WTC11 (cell line): ENCODE measurements at regions of chr10 and their contacts with region 1.

Region 1: DNA sequence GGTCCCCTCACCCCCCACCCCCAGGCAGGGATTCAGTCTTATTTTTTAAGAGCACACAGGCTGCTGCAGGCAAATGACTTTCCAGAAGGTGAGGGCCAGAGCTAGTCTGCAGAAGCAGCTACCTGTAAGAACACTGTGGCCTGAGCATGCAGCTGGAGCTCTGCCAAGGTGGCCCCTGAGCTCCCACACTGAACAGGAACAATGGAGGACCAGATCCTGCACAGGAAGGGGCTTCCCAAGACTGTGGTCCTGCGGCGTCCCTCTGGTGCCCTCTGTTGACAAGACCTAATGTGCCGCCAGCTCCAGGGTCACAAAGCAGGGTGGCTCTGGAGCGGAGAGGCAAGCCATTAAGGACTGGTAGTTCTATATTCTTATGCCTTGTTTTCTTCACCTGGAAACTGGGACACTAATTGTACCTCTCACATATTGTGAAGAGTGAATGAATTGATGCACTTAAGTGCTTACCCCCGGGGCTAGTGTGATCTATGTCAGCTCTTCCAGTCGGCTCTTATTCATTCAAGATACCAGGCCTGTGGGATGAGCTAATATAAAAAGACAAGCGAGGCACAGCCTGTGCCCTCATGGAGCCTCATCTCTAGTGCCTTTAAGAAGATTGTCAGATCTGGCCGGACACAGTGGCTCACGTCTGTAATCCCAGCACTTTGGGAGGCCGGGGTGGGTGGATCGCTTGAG is 8.0 kb upstream of the BEND7 start:
- DNase-seq: peak; percentile 83
- ATAC-seq: peak; percentile 100
- H3K4me3 Mint-ChIP-seq: peak overlapping the region; percentile 16; the same call in 1 of the 2 replicates
- H3K27ac Mint-ChIP-seq: no peak overlapping the region
- H3K4me1 Mint-ChIP-seq: peaks cover 12% of the 10 kb centered on the region
- H3K27me3 Mint-ChIP-seq: peaks cover 4% of the 10 kb centered on the region
- CTCF ChIP-seq: peak; percentile 53

Region 2: GRCh38 chr10:12572281-12572680 is 964.5 kb before region 1 on chr10:
- CTCF ChIA-PET with region 1: no interaction called
- POLR2A ChIA-PET with region 1: no interaction called
- DNase-seq: no peak
- ATAC-seq: no peak
- H3K4me3 Mint-ChIP-seq: no peak overlapping the region
- H3K27ac Mint-ChIP-seq: no peak overlapping the region
- H3K4me1 Mint-ChIP-seq: peaks cover 14% of the 10 kb centered on the region
- H3K27me3 Mint-ChIP-seq: no peaks in the 10 kb centered on the region; the same call in 1 of the 2 replicates
- CTCF ChIP-seq: no peak

Region 3: DNA sequence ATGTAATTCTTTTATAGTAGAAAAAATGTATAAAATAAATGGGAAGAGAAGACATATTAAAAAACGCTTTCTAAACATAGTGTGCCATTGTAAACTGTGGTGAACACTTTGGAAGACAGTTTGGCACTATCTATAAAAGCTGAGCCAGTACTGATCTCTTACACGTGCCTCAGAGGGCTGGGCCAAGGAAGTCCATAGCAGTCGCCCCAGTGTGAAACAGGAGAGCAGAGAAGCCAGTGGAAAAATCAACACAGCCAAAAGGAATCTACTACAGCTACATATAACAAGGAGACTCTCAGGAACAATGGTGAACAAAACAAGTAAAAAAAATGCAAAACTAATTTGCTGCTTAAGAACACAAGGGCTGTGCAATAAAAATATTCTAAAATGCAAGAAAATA is 209.3 kb before region 1 on chr10:
- CTCF ChIA-PET with region 1: no interaction called
- POLR2A ChIA-PET with region 1: no interaction called
- DNase-seq: no peak
- ATAC-seq: no peak
- H3K4me3 Mint-ChIP-seq: no peak overlapping the region
- H3K27ac Mint-ChIP-seq: peak overlapping the region; percentile 84
- H3K4me1 Mint-ChIP-seq: peaks cover 24% of the 10 kb centered on the region
- H3K27me3 Mint-ChIP-seq: no peaks in the 10 kb centered on the region
- CTCF ChIP-seq: no peak

Region 4: DNA sequence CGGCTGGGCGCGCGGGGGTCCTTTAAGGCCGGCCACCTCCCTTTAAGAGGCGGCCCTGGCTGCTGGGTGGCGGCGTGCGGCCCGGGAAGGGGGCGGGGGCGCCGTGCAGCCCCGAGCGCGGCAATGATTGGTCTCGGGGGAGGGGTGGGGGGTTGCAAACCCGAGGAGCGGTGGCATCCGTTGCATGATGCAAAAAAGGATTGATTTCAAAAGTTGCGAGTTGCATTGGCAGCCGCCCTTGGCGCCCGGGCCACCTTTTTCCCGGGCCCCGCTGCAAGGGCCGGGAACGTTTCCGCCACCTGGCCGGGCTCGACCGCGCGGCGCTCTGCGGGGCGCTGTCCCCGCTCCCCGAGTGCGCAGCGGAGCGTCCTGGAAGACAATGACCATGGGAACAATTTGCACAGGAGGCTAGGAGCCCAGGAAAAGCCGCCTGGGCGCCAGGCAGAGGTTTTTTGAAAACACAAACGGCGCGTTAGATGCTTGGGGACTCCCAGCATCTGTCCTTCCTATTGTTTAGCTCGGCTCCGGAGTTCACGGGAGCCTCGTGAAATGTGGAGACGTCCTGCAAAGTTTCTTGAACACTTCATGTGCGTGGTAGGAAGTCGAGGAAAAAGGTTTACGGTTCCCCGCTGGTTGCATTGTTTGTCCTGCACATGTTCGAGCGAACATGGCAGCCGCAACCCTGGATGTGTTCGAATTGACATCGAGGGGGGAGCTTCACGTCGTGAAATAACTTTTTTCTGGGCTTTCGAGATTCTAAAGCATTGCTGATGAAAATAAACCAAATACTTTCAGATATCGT is 188.4 kb before region 1 on chr10 and contains the start of gene SEPHS1:
- CTCF ChIA-PET with region 1: interaction called, 17 read pairs
- POLR2A ChIA-PET with region 1: interaction called, 5 read pairs
- DNase-seq: peak; percentile 81
- ATAC-seq: peak; percentile 25
- H3K4me3 Mint-ChIP-seq: peak within 1 kb of the TSS; percentile 94
- H3K27ac Mint-ChIP-seq: peak within 1 kb of the TSS; percentile 100
- H3K4me1 Mint-ChIP-seq: peaks cover 71% of the 10 kb centered on the region
- H3K27me3 Mint-ChIP-seq: no peaks in the 10 kb centered on the region; the same call in 1 of the 2 replicates
- CTCF ChIP-seq: no peak
- total RNA-seq, gene SEPHS1: 501 to 509 TPM (median 501 TPM) in 3 replicates

Region 5: GRCh38 chr10:13382703-13383398 is 154.0 kb before region 1 on chr10:
- CTCF ChIA-PET with region 1: interaction called, 13 read pairs
- POLR2A ChIA-PET with region 1: no interaction called
- DNase-seq: no peak
- ATAC-seq: peak; percentile 45
- H3K4me3 Mint-ChIP-seq: peak overlapping the region; percentile 69
- H3K27ac Mint-ChIP-seq: 0 out of 2 replicates have a peak overlapping the region, but pooled peaks have one; percentile 5
- H3K4me1 Mint-ChIP-seq: peaks cover 16% of the 10 kb centered on the region
- H3K27me3 Mint-ChIP-seq: peaks cover 24% of the 10 kb centered on the region
- CTCF ChIP-seq: no peak

Region 6: DNA sequence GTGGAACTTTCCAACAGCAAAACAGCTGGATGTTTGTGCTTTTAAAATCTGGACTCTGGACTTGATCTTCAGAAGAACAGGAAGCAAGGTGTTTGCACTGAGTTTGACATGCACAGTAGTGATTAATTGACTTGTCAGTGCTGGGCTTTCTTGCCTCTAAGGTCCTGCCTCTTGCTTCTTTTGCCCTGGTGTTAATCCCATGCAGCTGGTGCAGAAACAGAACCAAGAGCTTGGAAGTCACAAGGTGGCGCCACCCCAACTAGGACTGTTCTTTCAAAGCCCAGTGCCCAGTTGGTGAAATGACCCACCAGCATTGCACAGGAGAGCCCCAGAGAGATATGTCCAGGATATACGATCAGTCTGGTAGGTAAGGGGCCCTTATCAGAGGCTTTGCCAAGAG is 121.9 kb before region 1 on chr10:
- CTCF ChIA-PET with region 1: interaction called, 40 read pairs
- POLR2A ChIA-PET with region 1: no interaction called
- DNase-seq: peak; percentile 62
- ATAC-seq: peak; percentile 92
- H3K4me3 Mint-ChIP-seq: no peak overlapping the region
- H3K27ac Mint-ChIP-seq: no peak overlapping the region
- H3K4me1 Mint-ChIP-seq: no peaks in the 10 kb centered on the region
- H3K27me3 Mint-ChIP-seq: peaks cover 7% of the 10 kb centered on the region
- CTCF ChIP-seq: no peak

Region 7: GRCh38 chr10:13450069-13450468 is 86.8 kb before region 1 on chr10:
- CTCF ChIA-PET with region 1: interaction called, 14 read pairs
- POLR2A ChIA-PET with region 1: no interaction called
- DNase-seq: no peak
- ATAC-seq: no peak
- H3K4me3 Mint-ChIP-seq: no peak overlapping the region
- H3K27ac Mint-ChIP-seq: no peak overlapping the region
- H3K4me1 Mint-ChIP-seq: peaks cover 12% of the 10 kb centered on the region
- H3K27me3 Mint-ChIP-seq: no peaks in the 10 kb centered on the region
- CTCF ChIP-seq: no peak

Region 8: DNA sequence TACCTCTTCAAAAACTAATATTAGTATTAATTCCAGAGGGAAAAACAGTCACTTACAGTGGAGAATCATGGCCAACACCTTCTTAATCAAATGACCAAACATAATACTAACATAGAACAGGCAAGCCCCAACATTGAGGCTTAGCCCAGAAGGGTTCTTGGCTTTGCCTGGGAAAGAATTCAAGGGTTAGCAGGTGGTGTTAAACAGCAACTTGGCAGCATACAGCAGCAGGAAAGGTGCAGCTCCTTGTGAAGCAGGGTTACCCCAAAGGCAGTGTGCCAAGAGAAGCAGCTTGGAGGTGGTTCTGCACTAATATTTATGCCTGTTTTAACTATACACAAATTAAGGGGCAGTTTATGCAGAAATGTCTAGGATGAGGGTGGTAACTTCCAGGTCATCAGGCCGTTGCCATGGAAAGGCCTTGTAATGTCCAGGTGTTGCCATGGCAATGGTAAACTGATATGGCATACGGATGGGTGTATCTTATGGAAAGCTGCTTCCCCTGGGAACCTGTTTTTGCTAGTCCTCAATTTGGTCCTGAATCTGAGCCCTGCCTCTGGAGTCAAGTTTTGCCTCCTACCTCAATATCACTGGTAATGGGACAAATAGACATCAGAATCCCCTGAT is 19.2 kb after region 1 on chr10:
- CTCF ChIA-PET with region 1: interaction called, 10 read pairs
- POLR2A ChIA-PET with region 1: no interaction called
- DNase-seq: no peak
- ATAC-seq: no peak
- H3K4me3 Mint-ChIP-seq: no peak overlapping the region
- H3K27ac Mint-ChIP-seq: no peak overlapping the region
- H3K4me1 Mint-ChIP-seq: no peaks in the 10 kb centered on the region
- H3K27me3 Mint-ChIP-seq: no peaks in the 10 kb centered on the region
- CTCF ChIP-seq: no peak

Region 9: GRCh38 chr10:13593535-13593934 is 56.7 kb after region 1 on chr10:
- CTCF ChIA-PET with region 1: no interaction called
- POLR2A ChIA-PET with region 1: no interaction called
- DNase-seq: no peak
- ATAC-seq: no peak
- H3K4me3 Mint-ChIP-seq: no peak overlapping the region
- H3K27ac Mint-ChIP-seq: no peak overlapping the region
- H3K4me1 Mint-ChIP-seq: peaks cover 3% of the 10 kb centered on the region
- H3K27me3 Mint-ChIP-seq: no peaks in the 10 kb centered on the region
- CTCF ChIP-seq: no peak